Mammary epithelial cell (primary cell): ENCODE measurements at regions of chr4 and their contacts with region 1.

Region 1: DNA sequence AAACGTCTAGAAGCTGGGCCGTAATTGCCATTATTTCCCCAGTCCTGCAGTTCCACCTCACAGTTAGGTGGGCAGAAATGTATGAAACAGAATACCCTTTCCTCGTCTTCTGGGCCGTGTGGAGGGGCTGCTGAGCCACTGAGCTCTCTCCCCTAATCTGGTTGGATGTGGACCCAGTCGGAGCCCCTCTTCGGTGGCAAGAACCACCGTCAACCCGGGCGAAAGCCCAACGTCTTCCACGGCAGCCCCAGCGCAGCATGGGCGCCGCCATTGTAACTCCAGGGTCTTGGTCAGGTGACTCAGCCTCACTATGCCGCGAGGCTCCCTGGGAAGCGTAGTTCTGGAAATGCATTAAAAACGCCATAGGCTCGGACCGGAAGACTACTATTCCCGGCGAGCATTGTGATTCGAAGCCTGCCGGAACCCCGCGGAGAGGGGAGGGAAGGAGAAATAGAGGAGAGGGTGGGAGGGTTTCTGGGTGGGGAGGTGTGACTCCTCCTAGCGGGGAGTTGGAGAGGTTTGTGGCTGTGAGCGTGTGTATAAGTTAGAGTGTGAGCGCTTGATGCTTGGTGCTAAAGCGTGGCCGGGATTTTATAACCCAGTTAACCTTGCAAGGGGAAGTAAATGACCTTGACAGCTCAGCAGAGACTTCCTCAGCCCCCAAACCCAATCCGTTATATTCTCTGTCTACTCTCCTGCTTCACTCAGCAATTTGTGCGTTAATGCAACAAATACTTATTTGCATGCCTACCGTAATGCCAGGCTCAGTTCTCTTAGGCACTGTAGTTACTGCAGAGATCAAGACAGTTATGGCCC is at the start of gene GATB:
- DNase-seq: peak; percentile 94
- H3K4me3 ChIP-seq: peak within 1 kb of the TSS; percentile 65 to 82 (median 80)
- H3K27ac ChIP-seq: peak within 1 kb of the TSS; percentile 85
- H3K4me1 ChIP-seq: peaks cover 9% of the 10 kb centered on the region
- H3K27me3 ChIP-seq: no peaks in the 10 kb centered on the region
- CTCF ChIP-seq: peak; percentile 27 to 49
- total RNA-seq, gene GATB: 15.2 to 21.2 TPM

Region 2: DNA sequence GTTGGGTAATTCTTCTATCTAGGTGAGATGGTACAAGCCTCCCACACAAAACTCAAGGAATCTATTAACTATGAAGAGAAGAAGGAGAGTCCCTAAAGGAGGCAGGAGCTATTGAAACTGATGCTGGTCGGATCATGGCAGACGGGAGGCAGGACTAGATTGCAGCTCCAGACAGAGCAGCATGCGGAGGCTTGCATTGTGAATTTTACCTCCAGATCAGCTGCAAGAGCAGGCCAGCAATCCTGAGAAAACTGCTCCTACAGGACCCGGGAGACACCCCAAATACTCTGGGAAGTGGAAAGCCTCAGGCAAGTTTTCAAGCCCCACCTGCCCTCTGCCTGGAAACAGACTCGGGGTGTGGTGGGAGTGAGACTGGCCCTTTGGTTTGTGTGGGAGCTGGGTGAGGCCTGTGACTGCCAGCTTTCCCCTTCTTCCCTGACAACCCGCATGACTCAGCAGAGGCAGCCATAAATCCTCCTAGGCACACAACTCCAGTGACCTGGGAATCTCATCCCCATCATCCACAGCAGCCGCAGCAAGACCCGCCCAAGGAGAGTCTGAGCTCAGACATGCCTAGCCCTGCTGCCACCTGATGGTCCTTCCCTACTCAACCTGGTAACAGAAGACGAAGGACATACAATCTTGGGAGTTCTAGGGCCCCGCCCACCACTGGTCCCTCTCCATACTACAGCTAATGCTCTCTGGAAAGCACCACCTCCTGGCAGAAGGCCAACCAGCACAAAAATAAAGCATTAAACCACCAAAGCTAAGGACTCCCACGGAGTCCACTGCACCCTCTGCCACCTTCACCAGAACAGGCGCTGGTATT is 31.0 kb before region 1 on chr4:
- CTCF ChIA-PET with region 1: no interaction called
- dilution Hi-C with region 1: no loop called
- in situ Hi-C with region 1: no loop called
- intact Hi-C with region 1: loop called (anchors 2 kb)
- DNase-seq: peak; percentile 96
- H3K4me3 ChIP-seq: no peak overlapping the region
- H3K27ac ChIP-seq: peak overlapping the region; percentile 87
- H3K4me1 ChIP-seq: peaks cover 37% of the 10 kb centered on the region
- H3K27me3 ChIP-seq: no peaks in the 10 kb centered on the region
- CTCF ChIP-seq: peak in 1 of 2 donors; percentile 21